ENCODE measurements at regions of chr15 and their contacts with region 1.

Region 1: GRCh38 chr15:90071208-90071807 is 31.0 kb downstream of the IDH2 start:
- DNase-seq: peak; percentile 54 to 65
- H3K4me3 ChIP-seq: no peak overlapping the region
- H3K27ac ChIP-seq: no peak overlapping the region
- H3K4me1 ChIP-seq: no peaks in the 10 kb centered on the region
- H3K27me3 ChIP-seq: no peaks in the 10 kb centered on the region
- CTCF ChIP-seq: peak; percentile 79

Region 2: GRCh38 chr15:89828241-89829082 is 242.8 kb before region 1 on chr15:
- CTCF ChIA-PET with region 1: no interaction called
- POLR2A ChIA-PET with region 1: no interaction called
- intact Hi-C with region 1: no loop called
- DNase-seq: peak; percentile 75 to 78
- H3K4me3 ChIP-seq: 0 out of 2 replicates have a peak overlapping the region, but pooled peaks have one; percentile 6
- H3K27ac ChIP-seq: peak overlapping the region; percentile 79
- H3K4me1 ChIP-seq: peaks cover 67% of the 10 kb centered on the region
- H3K27me3 ChIP-seq: no peaks in the 10 kb centered on the region
- CTCF ChIP-seq: no peak

Region 3: GRCh38 chr15:89912674-89913396 is 158.5 kb before region 1 on chr15 and contains the start of gene ARPIN:
- CTCF ChIA-PET with region 1: no interaction called
- POLR2A ChIA-PET with region 1: no interaction called
- intact Hi-C with region 1: loop called (anchors 1 kb)
- DNase-seq: peak in 1 of 2 experiments; percentile 49
- H3K4me3 ChIP-seq: peak within 1 kb of the TSS; percentile 96
- H3K27ac ChIP-seq: peak within 1 kb of the TSS; percentile 59
- H3K4me1 ChIP-seq: peaks cover 60% of the 10 kb centered on the region
- H3K27me3 ChIP-seq: no peaks in the 10 kb centered on the region
- CTCF ChIP-seq: no peak
- total RNA-seq, gene ARPIN: 28.6 and 30.4 TPM in 2 replicates

Region 4: GRCh38 chr15:89946781-89947221 is 124.5 kb before region 1 on chr15:
- CTCF ChIA-PET with region 1: no interaction called
- POLR2A ChIA-PET with region 1: no interaction called
- intact Hi-C with region 1: no loop called
- DNase-seq: no peak
- H3K4me3 ChIP-seq: no peak overlapping the region
- H3K27ac ChIP-seq: no peak overlapping the region
- H3K4me1 ChIP-seq: no peaks in the 10 kb centered on the region
- H3K27me3 ChIP-seq: no peaks in the 10 kb centered on the region
- CTCF ChIP-seq: no peak

Region 5: GRCh38 chr15:89971592-89971997 is 99.7 kb before region 1 on chr15:
- CTCF ChIA-PET with region 1: interaction called, 4 read pairs
- POLR2A ChIA-PET with region 1: no interaction called
- intact Hi-C with region 1: loop called (anchors 1 kb)
- DNase-seq: peak in 1 of 2 experiments; percentile 57
- H3K4me3 ChIP-seq: no peak overlapping the region
- H3K27ac ChIP-seq: no peak overlapping the region
- H3K4me1 ChIP-seq: no peaks in the 10 kb centered on the region
- H3K27me3 ChIP-seq: no peaks in the 10 kb centered on the region
- CTCF ChIP-seq: peak; percentile 54

Region 6: GRCh38 chr15:90001683-90002427 is 69.5 kb before region 1 on chr15:
- CTCF ChIA-PET with region 1: interaction called, 3 read pairs
- POLR2A ChIA-PET with region 1: no interaction called
- intact Hi-C with region 1: loop called (anchors 5 kb)
- DNase-seq: peak in 1 of 2 experiments; percentile 42
- H3K4me3 ChIP-seq: peak overlapping the region; percentile 65; the same call in 1 of the 2 replicates
- H3K27ac ChIP-seq: peak overlapping the region; percentile 49
- H3K4me1 ChIP-seq: peaks cover 79% of the 10 kb centered on the region
- H3K27me3 ChIP-seq: no peaks in the 10 kb centered on the region
- CTCF ChIP-seq: no peak

Region 7: GRCh38 chr15:90035095-90035827 is 36.0 kb before region 1 on chr15:
- CTCF ChIA-PET with region 1: no interaction called
- POLR2A ChIA-PET with region 1: no interaction called
- intact Hi-C with region 1: loop called (anchors 1 kb)
- DNase-seq: peak; percentile 88 to 90
- H3K4me3 ChIP-seq: no peak overlapping the region; the same call in 1 of the 2 replicates
- H3K27ac ChIP-seq: peak overlapping the region; percentile 88
- H3K4me1 ChIP-seq: peaks cover 57% of the 10 kb centered on the region
- H3K27me3 ChIP-seq: no peaks in the 10 kb centered on the region
- CTCF ChIP-seq: no peak

Region 8: GRCh38 chr15:90046911-90047392 is 24.4 kb before region 1 on chr15:
- CTCF ChIA-PET with region 1: no interaction called
- POLR2A ChIA-PET with region 1: no interaction called
- intact Hi-C with region 1: loop called (anchors 2 kb)
- DNase-seq: peak; percentile 73 to 90
- H3K4me3 ChIP-seq: no peak overlapping the region
- H3K27ac ChIP-seq: peak overlapping the region; percentile 51
- H3K4me1 ChIP-seq: peaks cover 22% of the 10 kb centered on the region
- H3K27me3 ChIP-seq: no peaks in the 10 kb centered on the region
- CTCF ChIP-seq: no peak

Region 9: DNA sequence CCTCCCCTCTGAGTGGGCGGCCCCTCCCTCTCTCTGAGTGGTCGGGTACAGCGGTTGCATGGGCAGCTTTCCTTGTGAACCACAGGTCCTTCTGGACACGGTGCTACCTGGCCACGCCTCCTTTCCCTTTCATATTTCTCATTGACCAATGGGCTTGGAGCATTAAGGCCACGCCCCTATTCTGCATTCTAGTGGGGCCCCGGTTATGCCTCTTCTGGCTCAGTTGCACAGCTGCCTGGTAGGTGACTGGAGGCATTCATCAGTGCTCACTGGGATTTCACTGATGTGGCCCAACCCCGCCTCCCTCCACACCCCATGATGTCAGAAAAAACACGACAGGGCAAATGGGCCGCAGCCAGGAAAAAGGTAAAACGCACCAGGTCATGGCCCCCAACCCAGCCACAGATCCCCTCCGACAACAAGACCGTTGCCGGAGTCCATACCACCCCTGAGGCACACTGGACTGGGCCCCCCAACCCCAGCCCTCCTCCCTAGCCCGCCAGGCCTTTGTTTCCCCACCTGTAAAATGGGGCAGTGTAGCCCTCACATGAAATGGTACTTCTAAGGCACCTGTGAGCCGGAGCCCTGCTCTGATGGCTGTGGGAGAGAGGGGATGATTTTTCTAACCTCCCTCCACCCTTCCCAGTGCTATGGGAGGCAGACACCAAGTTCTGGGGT is 220.5 kb after region 1 on chr15:
- CTCF ChIA-PET with region 1: interaction called, 12 read pairs
- POLR2A ChIA-PET with region 1: no interaction called
- intact Hi-C with region 1: no loop called
- DNase-seq: peak; percentile 15 to 47
- H3K4me3 ChIP-seq: no peak overlapping the region
- H3K27ac ChIP-seq: no peak overlapping the region
- H3K4me1 ChIP-seq: peaks cover 4% of the 10 kb centered on the region; the same call in 1 of the 2 replicates
- H3K27me3 ChIP-seq: no peaks in the 10 kb centered on the region
- CTCF ChIP-seq: no peak

Measured in PC-9 (cell line).